ENCODE measurements at regions of chr6 and their contacts with region 1.

Region 1: GRCh38 chr6:92777146-92777740 is 642.1 kb downstream of the EPHA7 start:
- DNase-seq: peak; percentile 1
- H3K4me3 ChIP-seq: no peak overlapping the region
- H3K27ac ChIP-seq: no peak overlapping the region
- H3K4me1 ChIP-seq: peaks cover 5% of the 10 kb centered on the region
- H3K27me3 ChIP-seq: no peaks in the 10 kb centered on the region
- CTCF ChIP-seq: peak; percentile 73 to 74

Region 2: DNA sequence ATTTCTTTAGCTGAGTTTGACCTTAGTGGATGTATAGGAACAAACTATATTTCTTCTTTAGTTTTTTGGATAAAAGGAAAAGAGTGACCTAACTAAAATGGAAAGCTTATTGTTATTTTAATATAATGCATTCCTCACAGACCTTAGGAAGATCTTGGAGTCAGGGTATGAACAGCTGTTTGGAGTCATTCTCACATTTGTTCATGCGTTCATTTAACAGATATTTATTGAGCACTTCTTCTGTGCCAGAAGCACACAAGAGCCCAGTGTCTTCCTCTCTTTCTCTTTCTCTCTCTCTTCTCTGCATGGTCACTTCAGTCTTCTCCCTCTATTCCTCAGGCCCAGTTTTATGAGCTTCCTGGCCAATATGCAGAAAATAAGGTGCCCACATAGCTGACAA is 1446.3 kb before region 1 on chr6:
- CTCF ChIA-PET with region 1: no interaction called
- dilution Hi-C with region 1: no loop called
- in situ Hi-C with region 1: no loop called
- intact Hi-C with region 1: loop called (anchors 5 kb)
- DNase-seq: no peak
- H3K4me3 ChIP-seq: no peak overlapping the region
- H3K27ac ChIP-seq: no peak overlapping the region
- H3K4me1 ChIP-seq: no peaks in the 10 kb centered on the region
- H3K27me3 ChIP-seq: no peaks in the 10 kb centered on the region
- CTCF ChIP-seq: no peak

Region 3: DNA sequence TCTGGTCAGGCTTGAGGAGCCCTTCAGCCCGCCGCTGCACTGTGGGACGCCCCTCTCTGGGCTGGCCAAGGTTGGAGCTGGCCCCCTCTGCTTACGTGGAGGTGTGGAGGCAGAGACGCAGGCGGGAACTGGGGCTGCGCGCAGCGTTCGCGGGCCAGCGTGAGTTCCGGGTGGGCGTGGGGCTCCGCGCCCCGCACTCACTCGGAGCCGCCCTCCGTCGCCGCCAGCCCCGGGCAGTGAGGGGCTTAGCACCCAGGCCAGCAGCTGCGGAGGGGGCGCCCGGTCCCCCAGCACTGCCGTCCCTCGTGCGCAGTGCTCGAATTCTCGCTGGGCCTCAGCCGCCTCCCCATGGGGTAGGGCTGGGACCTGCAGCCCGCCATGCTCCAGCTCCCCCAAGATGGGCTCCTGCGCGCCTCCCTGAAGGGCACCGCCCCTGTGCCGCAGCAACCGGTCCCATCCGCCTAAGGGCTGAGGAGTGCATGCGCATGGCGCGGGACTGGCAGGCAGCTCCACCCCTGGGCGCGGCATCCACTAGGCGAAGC is 53.8 kb before region 1 on chr6:
- CTCF ChIA-PET with region 1: no interaction called
- dilution Hi-C with region 1: no loop called
- in situ Hi-C with region 1: no loop called
- intact Hi-C with region 1: no loop called
- DNase-seq: no peak
- H3K4me3 ChIP-seq: no peak overlapping the region
- H3K27ac ChIP-seq: no peak overlapping the region
- H3K4me1 ChIP-seq: no peaks in the 10 kb centered on the region
- H3K27me3 ChIP-seq: no peaks in the 10 kb centered on the region
- CTCF ChIP-seq: no peak

Region 4: GRCh38 chr6:92888316-92888715 is 111.1 kb after region 1 on chr6:
- CTCF ChIA-PET with region 1: no interaction called
- dilution Hi-C with region 1: no loop called
- in situ Hi-C with region 1: no loop called
- intact Hi-C with region 1: no loop called
- DNase-seq: no peak
- H3K4me3 ChIP-seq: no peak overlapping the region
- H3K27ac ChIP-seq: no peak overlapping the region
- H3K4me1 ChIP-seq: no peaks in the 10 kb centered on the region
- H3K27me3 ChIP-seq: no peaks in the 10 kb centered on the region
- CTCF ChIP-seq: no peak

Measured in mammary epithelial cell (primary cell).